Gastrocnemius medialis (tissue), 4 donors: ENCODE measurements at regions of chr9 and their contacts with region 1.

Region 1: DNA sequence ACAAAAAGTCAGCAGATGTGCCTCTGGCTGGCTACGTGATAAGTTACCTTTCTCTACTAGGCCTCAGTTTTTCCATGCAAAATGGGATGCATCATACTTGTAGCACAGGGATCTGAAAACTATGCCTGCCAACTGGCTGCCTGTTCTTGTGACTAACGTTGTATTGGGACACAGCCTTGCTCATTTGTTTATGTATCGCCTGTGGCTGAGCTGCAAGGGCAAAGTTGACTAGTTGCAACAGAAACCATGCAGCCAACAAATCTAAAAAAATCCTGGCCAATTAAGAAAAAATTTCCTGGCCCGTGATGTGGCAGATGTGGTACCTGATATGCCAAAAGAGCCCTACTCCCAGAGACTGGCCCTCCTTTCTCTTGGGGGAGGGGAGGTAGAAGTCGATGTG is 131.3 kb downstream of the SEC61B start:
- DNase-seq: no peak
- ATAC-seq: no peak
- H3K4me3 ChIP-seq: no peak overlapping the region
- H3K27ac ChIP-seq: peak overlapping the region in 3 of 4 donors; percentile 20 to 44 (median 38)
- H3K4me1 ChIP-seq: peaks cover 26 to 27% of the 10 kb centered on the region in 2 donors
- H3K27me3 ChIP-seq: no peaks in the 10 kb centered on the region
- CTCF ChIP-seq: no peak
- POLR2A ChIP-seq: no peak

Region 2: GRCh38 chr9:99221621-99222415 is 131.6 kb before region 1 on chr9 and contains the starts of genes ALG2 and SEC61B:
- in situ Hi-C with region 1: no loop called
- intact Hi-C with region 1: loop called (anchors 2 kb)
- DNase-seq: peak; percentile 91 to 93
- ATAC-seq: peak; percentile 94 to 95
- H3K4me3 ChIP-seq: peak within 1 kb of the TSS; percentile 89 to 98 (median 94)
- H3K27ac ChIP-seq: peak within 1 kb of the TSS; percentile 88 to 98 (median 96)
- H3K4me1 ChIP-seq: peaks cover 70 to 77% of the 10 kb centered on the region in 2 donors
- H3K27me3 ChIP-seq: no peaks in the 10 kb centered on the region
- CTCF ChIP-seq: no peak
- POLR2A ChIP-seq: peak; percentile 98
- total RNA-seq, gene ALG2: 12.3 to 19.9 (median 14.7) TPM
- total RNA-seq, gene SEC61B: 20.5 to 50.5 (median 24.9) TPM

Region 3: DNA sequence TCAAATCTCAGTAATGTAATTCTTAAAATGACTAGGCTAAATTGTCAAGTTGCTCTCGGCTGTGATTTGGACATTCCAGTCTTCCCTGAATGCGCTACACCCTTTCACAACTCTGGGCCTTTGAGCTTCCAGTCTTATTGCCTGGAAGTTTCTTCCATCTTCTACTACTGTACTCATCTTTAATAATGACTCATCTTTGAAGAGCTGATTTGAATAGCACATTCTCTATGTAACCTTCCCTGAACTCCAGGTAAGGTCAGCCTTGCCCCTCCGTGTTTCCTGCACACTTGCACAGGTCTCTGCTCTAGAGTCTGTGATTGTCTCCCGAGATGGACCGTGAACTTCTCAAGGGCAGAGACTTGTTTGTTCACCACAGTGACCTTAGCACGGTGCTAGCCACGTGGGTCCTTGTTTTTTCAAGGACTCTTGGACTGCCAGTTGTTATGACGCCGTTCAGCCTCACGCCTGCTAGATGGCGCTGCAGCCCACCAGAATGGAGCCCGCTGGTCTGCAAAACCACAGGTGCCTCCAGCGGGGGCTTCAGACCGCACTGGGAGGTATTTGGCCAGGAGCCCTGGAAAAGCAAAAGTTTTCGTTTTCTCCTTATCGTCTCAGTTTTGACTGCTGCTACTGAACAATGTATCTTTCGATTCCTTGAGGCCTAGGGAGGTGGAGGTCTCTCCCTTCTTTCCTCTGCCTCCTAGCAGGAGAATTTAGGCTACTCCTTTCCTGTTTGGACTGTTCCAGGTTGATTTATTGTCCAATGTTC is 87.0 kb before region 1 on chr9:
- in situ Hi-C with region 1: loop called in 1 of 4 experiments (anchors 5 kb)
- intact Hi-C with region 1: no loop called
- DNase-seq: peak; percentile 53 to 81
- ATAC-seq: peak; percentile 69 to 85
- H3K4me3 ChIP-seq: no peak overlapping the region
- H3K27ac ChIP-seq: peak overlapping the region; percentile 35 to 61 (median 44)
- H3K4me1 ChIP-seq: peaks cover 0 to 9% of the 10 kb centered on the region in 2 donors
- H3K27me3 ChIP-seq: no peaks in the 10 kb centered on the region
- CTCF ChIP-seq: peak; percentile 84 to 91 (median 87)
- POLR2A ChIP-seq: no peak

Region 4: DNA sequence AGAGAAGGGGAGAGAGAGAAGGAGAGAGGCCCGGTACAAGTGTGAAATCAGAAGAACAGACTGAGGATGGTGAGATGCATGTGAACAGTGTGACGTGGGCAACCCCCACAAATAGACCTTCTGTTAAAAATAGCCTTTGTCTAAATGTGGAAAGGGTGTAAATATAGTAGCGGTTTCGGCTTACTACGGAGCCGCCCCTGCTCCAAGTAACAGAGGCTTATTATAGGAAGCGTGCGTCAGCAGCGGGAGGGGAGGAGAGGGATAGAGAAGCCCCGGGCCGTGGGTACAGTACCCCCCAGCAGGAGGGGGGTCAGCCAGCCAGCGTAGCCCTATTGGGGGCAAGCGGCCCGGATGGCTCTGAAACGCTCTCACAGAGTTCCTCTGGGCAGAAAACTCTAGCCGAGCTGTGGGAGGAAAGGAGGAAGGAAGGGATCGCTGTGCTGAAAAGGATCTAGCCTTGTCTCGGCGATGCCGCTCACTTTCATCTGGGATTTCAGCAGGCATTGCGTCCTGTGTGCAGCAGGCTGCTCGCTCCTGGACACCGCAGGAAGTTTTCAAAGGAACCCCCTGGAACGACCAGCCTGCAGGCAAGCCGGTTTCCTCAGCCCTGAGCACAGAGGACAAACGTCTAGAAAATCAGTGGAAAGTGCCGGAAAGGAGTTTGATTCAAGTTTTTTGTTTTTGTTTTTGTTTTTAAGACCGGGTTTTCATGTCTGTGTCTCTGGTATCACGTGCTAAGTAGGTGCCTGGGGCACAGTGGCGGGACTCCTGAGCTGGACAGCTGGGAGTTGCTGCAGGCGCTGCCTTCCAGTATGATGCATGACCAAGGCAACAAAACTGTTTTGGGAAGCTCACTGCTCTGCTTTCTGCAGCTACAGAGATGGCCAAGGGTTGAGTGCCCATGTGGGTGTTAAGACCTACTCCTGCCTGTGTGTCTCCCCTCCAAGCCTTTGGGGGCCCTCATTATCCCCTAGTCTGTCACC is 15.2 kb after region 1 on chr9:
- in situ Hi-C with region 1: no loop called
- intact Hi-C with region 1: loop called (anchors 1 kb)
- DNase-seq: peak; percentile 79 to 93
- ATAC-seq: peak; percentile 85 to 92
- H3K4me3 ChIP-seq: peak overlapping the region; percentile 53 to 70 (median 60)
- H3K27ac ChIP-seq: peak overlapping the region; percentile 92 to 99 (median 96)
- H3K4me1 ChIP-seq: peaks cover 37 to 48% of the 10 kb centered on the region in 2 donors
- H3K27me3 ChIP-seq: no peaks in the 10 kb centered on the region
- CTCF ChIP-seq: no peak
- POLR2A ChIP-seq: peak; percentile 92 to 93

Region 5: GRCh38 chr9:100575765-100576386 is 1222.5 kb after region 1 on chr9:
- in situ Hi-C with region 1: no loop called
- intact Hi-C with region 1: loop called (anchors 5 kb)
- DNase-seq: no peak
- ATAC-seq: no peak
- H3K4me3 ChIP-seq: no peak overlapping the region
- H3K27ac ChIP-seq: peak overlapping the region; percentile 80 to 94 (median 88)
- H3K4me1 ChIP-seq: peaks cover 22 to 25% of the 10 kb centered on the region in 2 donors
- H3K27me3 ChIP-seq: no peaks in the 10 kb centered on the region
- CTCF ChIP-seq: no peak
- POLR2A ChIP-seq: no peak